ENCODE measurements at regions of chrX and their contacts with region 1.

Region 1: DNA sequence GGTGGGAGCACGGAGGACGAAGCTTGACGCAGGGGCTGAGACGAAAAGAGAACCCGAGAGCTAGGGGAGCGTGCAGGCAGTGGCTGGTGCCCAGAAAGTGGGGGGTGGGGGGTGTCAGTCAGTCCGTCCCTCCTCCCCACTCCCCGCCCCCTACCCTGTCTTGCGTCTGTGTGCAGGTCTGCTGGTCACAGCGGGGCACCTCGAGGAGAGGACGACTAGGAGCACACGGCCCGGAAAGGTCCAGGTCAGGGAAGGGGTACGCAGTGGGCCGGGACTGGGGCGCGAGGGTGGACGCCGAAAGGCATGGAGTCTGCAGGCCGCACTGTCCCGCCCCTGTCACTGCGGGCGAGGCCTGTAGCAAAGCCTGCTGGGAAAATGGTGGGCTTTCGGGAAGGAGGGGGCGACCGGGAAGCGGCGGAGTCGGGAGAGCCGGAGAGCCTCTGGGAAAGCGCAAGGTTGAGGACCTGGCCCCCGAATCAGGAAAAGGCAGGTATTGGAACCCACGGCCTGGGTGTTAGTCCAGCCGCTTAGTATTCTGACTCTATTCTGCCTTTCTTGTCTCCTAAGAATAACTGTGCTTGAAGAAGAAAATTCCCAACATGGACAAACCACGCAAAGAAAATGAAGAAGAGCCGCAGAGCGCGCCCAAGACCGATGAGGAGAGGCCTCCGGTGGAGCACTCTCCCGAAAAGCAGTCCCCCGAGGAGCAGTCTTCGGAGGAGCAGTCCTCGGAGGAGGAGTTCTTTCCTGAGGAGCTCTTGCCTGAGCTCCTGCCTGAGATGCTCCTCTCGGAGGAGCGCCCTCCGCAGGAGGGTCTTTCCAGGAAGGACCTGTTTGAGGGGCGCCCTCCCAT is 769 bp downstream of the TCEAL1 start:
- DNase-seq: peak; percentile 80
- H3K4me3 ChIP-seq: peak overlapping the region; percentile 58 to 74
- H3K27ac ChIP-seq: peak overlapping the region; percentile 93 to 96
- H3K4me1 ChIP-seq: no peaks in the 10 kb centered on the region
- H3K27me3 ChIP-seq: no peaks in the 10 kb centered on the region
- CTCF ChIP-seq: peak; percentile 13 to 26 (median 15)
- POLR2A ChIP-seq: no peak

Region 2: GRCh38 chrX:103233263-103233662 is 396.3 kb before region 1 on chrX:
- intact Hi-C with region 1: no loop called
- DNase-seq: no peak
- H3K4me3 ChIP-seq: no peak overlapping the region
- H3K27ac ChIP-seq: no peak overlapping the region
- H3K4me1 ChIP-seq: no peaks in the 10 kb centered on the region
- H3K27me3 ChIP-seq: no peaks in the 10 kb centered on the region
- CTCF ChIP-seq: no peak
- POLR2A ChIP-seq: no peak

Region 3: DNA sequence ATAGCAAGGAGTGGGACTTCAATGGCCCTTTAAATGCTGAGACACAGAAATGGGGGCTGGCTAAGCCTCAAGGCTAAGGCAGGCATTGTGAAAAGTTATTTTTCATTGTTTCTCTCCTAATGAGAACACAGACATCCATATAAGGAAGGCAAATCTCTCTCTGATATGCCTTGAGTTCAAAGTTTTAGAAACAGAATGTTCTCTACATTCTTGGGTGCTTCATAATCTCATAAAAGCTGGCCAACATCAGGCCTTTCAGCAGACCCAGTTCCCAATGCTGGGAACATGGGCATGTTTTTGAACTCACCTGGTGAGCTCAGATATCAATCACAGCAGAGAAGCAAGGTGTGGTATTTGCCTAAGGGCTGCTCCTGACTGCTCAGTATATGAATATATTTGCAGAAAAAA is 90.8 kb before region 1 on chrX:
- intact Hi-C with region 1: loop called (anchors 5 kb)
- DNase-seq: peak; percentile 56
- H3K4me3 ChIP-seq: no peak overlapping the region
- H3K27ac ChIP-seq: peak overlapping the region; percentile 91 to 92
- H3K4me1 ChIP-seq: peaks cover 25% of the 10 kb centered on the region
- H3K27me3 ChIP-seq: no peaks in the 10 kb centered on the region
- CTCF ChIP-seq: no peak
- POLR2A ChIP-seq: no peak

Region 4: DNA sequence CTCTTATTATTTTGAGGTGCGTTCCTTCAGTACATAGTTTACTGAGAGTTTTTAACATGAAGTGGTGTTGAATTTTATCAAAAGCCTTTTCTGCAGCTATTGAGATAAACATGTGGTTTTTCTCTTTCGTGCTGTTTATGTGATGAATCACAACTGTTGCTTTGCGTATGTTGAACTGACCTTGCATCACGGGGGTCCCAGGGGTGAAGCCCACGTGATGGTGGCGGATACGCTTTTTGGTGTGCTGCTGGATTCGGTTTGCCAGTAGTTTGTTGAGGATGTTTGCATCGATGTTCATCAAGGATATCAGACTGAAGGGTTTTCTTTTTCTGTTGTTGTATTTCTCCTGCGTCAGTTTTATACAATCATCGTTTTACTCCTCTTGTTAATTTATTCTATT is 388.6 kb after region 1 on chrX:
- intact Hi-C with region 1: no loop called
- DNase-seq: no peak
- H3K4me3 ChIP-seq: no peak overlapping the region
- H3K27ac ChIP-seq: no peak overlapping the region
- H3K4me1 ChIP-seq: no peaks in the 10 kb centered on the region
- H3K27me3 ChIP-seq: no peaks in the 10 kb centered on the region
- CTCF ChIP-seq: no peak
- POLR2A ChIP-seq: no peak

Measured in testis (tissue), 5 donors.